ENCODE measurements at regions of chr15 and their contacts with region 1.

Region 1: DNA sequence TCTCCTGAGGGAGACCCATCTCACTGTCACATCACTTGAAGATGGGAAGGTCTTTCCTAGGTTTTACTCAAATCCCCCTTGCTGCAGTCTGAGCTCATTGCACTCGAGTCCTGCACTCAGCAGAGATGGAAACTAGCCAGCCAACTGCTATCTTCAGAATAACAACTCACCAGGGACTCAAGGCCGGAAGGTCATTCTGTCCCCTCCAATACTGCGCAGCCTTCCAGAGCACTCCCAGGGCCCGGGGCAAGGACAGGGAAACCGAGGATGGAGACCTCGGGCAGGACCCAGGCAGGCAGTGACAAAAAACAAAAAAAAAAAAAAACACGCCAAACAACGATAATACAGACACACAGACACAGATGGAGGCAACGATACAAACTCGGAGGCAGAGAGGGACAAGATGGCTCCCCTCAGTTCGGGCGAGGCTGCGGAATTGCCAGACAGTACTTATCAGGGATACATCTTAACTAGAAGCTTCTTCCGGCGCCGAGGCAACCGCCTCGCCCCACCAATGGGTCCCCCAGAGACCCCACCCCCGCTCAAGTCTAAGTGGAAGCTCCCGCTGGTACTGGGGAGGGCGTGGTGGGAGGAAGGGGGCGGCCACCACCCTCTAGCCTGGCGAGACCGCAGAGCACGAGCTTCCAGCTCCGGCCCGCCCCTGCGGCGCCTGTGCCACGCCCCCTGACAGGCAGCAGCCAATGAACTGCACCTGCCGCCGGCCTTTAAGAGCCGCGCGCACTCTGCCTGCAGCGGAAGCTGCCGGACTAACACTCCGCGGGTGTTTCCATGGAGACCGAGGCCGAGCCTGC is 7.0 kb upstream of the MAP1A start:
- DNase-seq: peak; percentile 99
- H3K4me3 Mint-ChIP-seq: peak overlapping the region; percentile 89
- H3K27ac Mint-ChIP-seq: peak overlapping the region; percentile 89
- H3K4me1 Mint-ChIP-seq: peaks cover 47% of the 10 kb centered on the region
- H3K27me3 Mint-ChIP-seq: peaks cover 12% of the 10 kb centered on the region

Region 2: GRCh38 chr15:43329960-43330779 is 180.2 kb before region 1 on chr15 and contains the start of gene LCMT2:
- intact Hi-C with region 1: loop called (anchors 1 kb)
- DNase-seq: peak; percentile 88
- H3K4me3 Mint-ChIP-seq: peak within 1 kb of the TSS; percentile 91
- H3K27ac Mint-ChIP-seq: peak within 1 kb of the TSS; percentile 97
- H3K4me1 Mint-ChIP-seq: peaks cover 36% of the 10 kb centered on the region
- H3K27me3 Mint-ChIP-seq: no peaks in the 10 kb centered on the region
- total RNA-seq, gene LCMT2: 15.7 and 16.8 TPM in 2 replicates

Region 3: DNA sequence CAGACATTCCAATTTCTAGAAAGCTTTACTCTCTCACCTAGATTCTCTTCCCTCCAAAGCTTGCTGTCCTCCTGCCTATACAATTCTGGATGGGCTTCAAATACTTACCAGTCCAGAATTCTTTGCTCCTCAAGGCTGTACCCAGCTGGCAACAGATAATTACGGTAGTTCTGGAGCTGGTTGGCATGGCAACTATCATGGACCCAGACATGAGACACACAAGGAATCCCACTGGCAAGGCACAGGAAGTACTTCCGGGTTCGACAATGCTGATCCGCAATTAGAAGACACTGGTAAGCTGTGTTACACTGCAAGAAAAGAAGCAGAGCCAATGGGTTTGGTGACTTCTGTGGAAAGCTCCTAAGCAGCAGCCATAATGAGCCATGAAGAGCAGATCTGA is 101.6 kb before region 1 on chr15:
- intact Hi-C with region 1: no loop called
- DNase-seq: no peak
- H3K4me3 Mint-ChIP-seq: no peak overlapping the region
- H3K27ac Mint-ChIP-seq: no peak overlapping the region
- H3K4me1 Mint-ChIP-seq: peaks cover 5% of the 10 kb centered on the region
- H3K27me3 Mint-ChIP-seq: no peaks in the 10 kb centered on the region

Region 4: GRCh38 chr15:43440721-43441281 is 69.6 kb before region 1 on chr15:
- intact Hi-C with region 1: loop called (anchors 2 kb)
- DNase-seq: peak; percentile 19
- H3K4me3 Mint-ChIP-seq: no peak overlapping the region
- H3K27ac Mint-ChIP-seq: peak overlapping the region; percentile 93
- H3K4me1 Mint-ChIP-seq: peaks cover 7% of the 10 kb centered on the region
- H3K27me3 Mint-ChIP-seq: no peaks in the 10 kb centered on the region

Region 5: DNA sequence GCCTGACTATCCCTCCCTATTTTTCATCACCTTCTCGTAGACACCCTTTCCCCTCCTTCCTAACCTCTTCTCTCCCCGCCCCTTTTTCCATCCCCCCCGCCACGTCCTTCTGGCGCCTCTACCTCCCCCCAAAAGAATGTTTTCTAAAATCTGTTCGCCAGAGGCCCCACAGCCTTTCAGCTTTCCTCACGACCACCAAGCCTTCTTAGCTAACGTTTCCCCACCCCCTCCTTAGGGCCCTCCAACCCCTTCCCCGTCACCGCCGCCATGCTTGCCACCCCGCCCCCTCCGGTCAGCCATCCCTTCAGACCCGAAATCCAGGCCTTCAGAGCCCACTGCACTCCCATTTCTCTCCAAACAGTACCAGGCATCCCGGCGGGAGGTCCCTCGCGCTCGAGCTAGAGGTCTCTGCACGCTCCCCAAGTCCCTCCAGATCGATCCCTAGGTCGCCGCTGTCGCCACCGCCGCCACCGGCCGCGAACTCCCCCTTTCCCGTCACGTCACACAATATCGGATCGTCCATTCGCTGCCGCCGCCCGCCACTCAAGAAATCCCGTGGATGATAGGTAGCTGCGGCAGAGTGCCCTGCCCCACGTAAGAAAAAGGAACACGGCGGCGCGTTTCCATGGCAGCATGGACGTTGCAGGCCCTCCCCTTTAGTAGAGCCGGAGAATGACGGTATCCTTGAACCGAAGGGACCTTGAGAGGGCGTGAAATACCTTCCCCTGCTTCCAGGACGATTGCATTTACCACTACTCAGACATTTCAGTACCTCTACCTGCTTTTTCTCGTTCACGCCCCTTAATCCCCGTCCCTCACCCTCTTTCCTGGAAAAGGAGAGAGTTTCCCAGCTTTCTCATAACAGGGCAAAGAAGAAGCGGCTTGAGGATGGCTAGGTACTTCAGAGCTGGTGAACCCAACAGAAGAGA is 17.5 kb before region 1 on chr15 and contains the start of gene TP53BP1:
- intact Hi-C with region 1: loop called (anchors 1 kb)
- DNase-seq: peak; percentile 94
- H3K4me3 Mint-ChIP-seq: peak within 1 kb of the TSS; percentile 96
- H3K27ac Mint-ChIP-seq: peak within 1 kb of the TSS; percentile 95
- H3K4me1 Mint-ChIP-seq: peaks cover 25% of the 10 kb centered on the region
- H3K27me3 Mint-ChIP-seq: no peaks in the 10 kb centered on the region
- total RNA-seq, gene TP53BP1: 43.8 and 46.6 TPM in 2 replicates

Region 6: DNA sequence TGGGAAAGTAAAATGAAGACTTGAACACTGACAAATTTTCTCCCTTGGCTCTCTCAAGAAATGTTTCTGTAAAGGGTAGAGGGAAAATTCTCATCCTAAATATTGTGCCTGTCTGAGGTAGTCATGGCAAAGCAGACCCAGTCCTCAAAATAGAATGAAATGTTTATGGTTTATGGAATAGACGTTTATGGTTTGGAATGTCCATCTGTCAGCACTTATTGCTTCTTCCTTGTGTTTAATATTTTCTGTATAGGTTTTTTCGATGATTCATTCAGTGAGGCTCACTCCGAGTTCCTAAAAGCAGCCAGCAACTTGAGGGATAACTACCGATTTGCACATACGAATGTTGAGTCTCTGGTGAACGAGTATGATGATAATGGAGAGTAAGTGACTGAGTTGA is 252.4 kb after region 1 on chr15:
- intact Hi-C with region 1: no loop called
- DNase-seq: no peak
- H3K4me3 Mint-ChIP-seq: no peak overlapping the region
- H3K27ac Mint-ChIP-seq: no peak overlapping the region
- H3K4me1 Mint-ChIP-seq: no peaks in the 10 kb centered on the region
- H3K27me3 Mint-ChIP-seq: no peaks in the 10 kb centered on the region

Measured in activated T-helper 2 cell treated with anti-CD3 and anti-CD28 coated beads, Interferon-gamma antibody, Interleukin-2, Interleukin-4, amounts not matched to agents 10 μg/mL and 5 μg/mL and 100 μg/mL, durations not matched to agents 14 hours and 24 hours and 36 hours (primary cell).